ENCODE measurements at regions of chr10 and their contacts with region 1.

Region 1: GRCh38 chr10:119165171-119166110 is at the start of gene SFXN4:
- DNase-seq: peak; percentile 59 to 91 (median 74)
- ATAC-seq: peak; percentile 94
- H3K4me3 ChIP-seq: peak within 1 kb of the TSS; percentile 92
- H3K4me3 Mint-ChIP-seq: peak within 1 kb of the TSS; percentile 94
- H3K27ac ChIP-seq: peak within 1 kb of the TSS; percentile 50 to 75
- H3K27ac Mint-ChIP-seq: peak within 1 kb of the TSS; percentile 90
- H3K4me1 ChIP-seq: peaks cover 24% of the 10 kb centered on the region
- H3K4me1 Mint-ChIP-seq: peaks cover 49% of the 10 kb centered on the region
- H3K27me3 ChIP-seq: no peaks in the 10 kb centered on the region
- H3K27me3 Mint-ChIP-seq: no peaks in the 10 kb centered on the region
- CTCF ChIP-seq: no peak
- total RNA-seq, gene SFXN4: 7.1 to 7.8 TPM

Region 2: DNA sequence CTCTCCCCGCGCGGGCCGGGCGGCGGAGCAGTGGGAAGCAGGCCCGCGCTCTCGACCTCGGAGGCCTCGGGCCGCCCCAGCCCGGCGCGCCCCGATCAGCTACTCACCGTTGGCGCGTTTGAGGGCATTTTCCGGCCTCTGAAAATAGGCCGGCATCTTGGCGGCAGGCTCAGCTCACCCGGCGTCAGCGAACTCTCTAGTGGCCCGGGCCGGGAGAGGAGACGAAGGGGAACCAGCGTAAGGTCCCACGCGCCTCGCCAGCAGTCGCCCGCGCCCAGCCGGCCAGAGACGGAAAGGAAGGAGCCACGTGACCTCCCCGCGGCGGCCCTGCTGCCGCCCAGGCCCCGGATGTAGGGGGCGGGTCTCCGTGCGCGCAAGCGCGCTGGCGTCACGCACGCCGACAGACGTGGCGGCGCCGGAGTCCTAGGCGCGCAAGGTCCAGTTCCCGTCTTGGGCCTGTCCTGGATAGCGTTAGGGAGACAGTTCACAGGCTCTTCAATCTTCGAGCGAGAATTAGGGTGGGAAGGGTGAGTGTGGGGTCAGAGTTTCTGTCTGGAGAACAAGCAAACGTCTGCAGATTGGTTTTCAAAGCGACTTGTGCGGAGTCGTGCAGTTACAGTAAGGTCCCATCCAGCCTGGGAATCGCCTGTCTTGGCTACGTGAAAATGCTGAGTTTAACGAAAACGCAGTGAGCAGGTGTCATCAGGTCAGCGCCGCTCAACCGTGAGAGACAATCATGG is 84.8 kb before region 1 on chr10 and contains the start of gene EIF3A:
- CTCF ChIA-PET with region 1: no interaction called
- POLR2A ChIA-PET with region 1: interaction called, 8 read pairs
- intact Hi-C with region 1: loop called in 1 of 2 experiments (anchors 2 kb)
- DNase-seq: peak; percentile 82 to 96 (median 88)
- ATAC-seq: peak; percentile 69
- H3K4me3 ChIP-seq: peak within 1 kb of the TSS; percentile 99
- H3K4me3 Mint-ChIP-seq: peak within 1 kb of the TSS; percentile 100
- H3K27ac ChIP-seq: peak within 1 kb of the TSS; percentile 92 to 96
- H3K27ac Mint-ChIP-seq: peak within 1 kb of the TSS; percentile 99
- H3K4me1 ChIP-seq: peaks cover 33% of the 10 kb centered on the region
- H3K4me1 Mint-ChIP-seq: peaks cover 64% of the 10 kb centered on the region
- H3K27me3 ChIP-seq: no peaks in the 10 kb centered on the region
- H3K27me3 Mint-ChIP-seq: no peaks in the 10 kb centered on the region
- CTCF ChIP-seq: no peak
- total RNA-seq, gene EIF3A: 129 TPM

Region 3: GRCh38 chr10:119103903-119104652 is 61.4 kb before region 1 on chr10 and contains the start of gene DENND10:
- CTCF ChIA-PET with region 1: no interaction called
- POLR2A ChIA-PET with region 1: interaction called, 6 read pairs
- intact Hi-C with region 1: loop called in 1 of 2 experiments (anchors 2 kb)
- DNase-seq: peak; percentile 51 to 90 (median 71)
- ATAC-seq: peak; percentile 77
- H3K4me3 ChIP-seq: peak within 1 kb of the TSS; percentile 66
- H3K4me3 Mint-ChIP-seq: peak within 1 kb of the TSS; percentile 95
- H3K27ac ChIP-seq: peak within 1 kb of the TSS in 1 of 2 donors; percentile 40
- H3K27ac Mint-ChIP-seq: peak within 1 kb of the TSS; percentile 94
- H3K4me1 ChIP-seq: peaks cover 26% of the 10 kb centered on the region
- H3K4me1 Mint-ChIP-seq: peaks cover 13% of the 10 kb centered on the region
- H3K27me3 ChIP-seq: no peaks in the 10 kb centered on the region
- H3K27me3 Mint-ChIP-seq: no peaks in the 10 kb centered on the region
- CTCF ChIP-seq: no peak
- total RNA-seq, gene DENND10: 40.4 to 45.6 TPM

Region 4: DNA sequence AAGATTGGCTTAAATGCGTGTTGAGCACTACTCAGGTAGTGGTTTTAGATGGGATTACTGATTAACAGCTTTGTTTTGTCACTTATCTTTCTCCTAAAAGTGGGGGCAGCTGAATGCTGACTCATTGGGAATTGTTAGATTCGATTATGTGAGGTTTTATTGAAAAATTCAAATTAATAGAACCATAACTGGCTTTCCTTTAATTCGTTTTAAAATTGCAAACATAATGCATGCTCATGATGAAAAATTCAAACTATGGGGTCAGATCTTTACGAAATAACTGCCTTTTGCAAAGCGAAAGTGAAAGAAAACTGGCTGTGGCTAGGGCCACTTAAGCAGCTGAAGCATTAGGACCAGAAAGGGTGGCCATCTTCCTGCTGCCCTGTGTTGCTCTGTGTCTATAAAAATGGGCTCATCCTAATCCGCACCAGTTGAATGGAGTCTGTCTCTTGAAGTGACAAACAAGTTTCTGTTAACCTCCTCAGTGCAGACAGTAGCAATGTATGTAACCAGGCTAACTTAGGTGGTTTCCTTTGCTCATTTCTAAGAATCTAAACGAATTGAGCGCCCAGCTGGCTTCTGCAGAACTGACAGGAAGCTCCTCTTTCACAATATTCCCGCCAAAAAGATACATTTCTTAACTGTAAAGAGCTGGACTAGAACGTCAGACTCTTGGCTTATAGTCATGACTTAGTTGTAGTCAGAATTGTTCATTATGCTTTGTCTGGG is 33.8 kb before region 1 on chr10:
- CTCF ChIA-PET with region 1: no interaction called
- POLR2A ChIA-PET with region 1: interaction called, 10 read pairs
- intact Hi-C with region 1: no loop called
- DNase-seq: peak in 8 of 14 experiments; percentile 3 to 70 (median 22)
- ATAC-seq: peak; percentile 87
- H3K4me3 ChIP-seq: peak overlapping the region; percentile 58
- H3K4me3 Mint-ChIP-seq: peak overlapping the region; percentile 83
- H3K27ac ChIP-seq: peak overlapping the region; percentile 40 to 57
- H3K27ac Mint-ChIP-seq: peak overlapping the region; percentile 86
- H3K4me1 ChIP-seq: peaks cover 39% of the 10 kb centered on the region
- H3K4me1 Mint-ChIP-seq: peaks cover 39% of the 10 kb centered on the region
- H3K27me3 ChIP-seq: no peaks in the 10 kb centered on the region
- H3K27me3 Mint-ChIP-seq: no peaks in the 10 kb centered on the region
- CTCF ChIP-seq: no peak

Region 5: GRCh38 chr10:119178372-119179119 is 13.1 kb after region 1 on chr10 and contains the start of gene PRDX3:
- CTCF ChIA-PET with region 1: no interaction called
- POLR2A ChIA-PET with region 1: interaction called, 7 read pairs
- intact Hi-C with region 1: loop called in 1 of 2 experiments (anchors 1 kb)
- DNase-seq: peak; percentile 85 to 96 (median 91)
- ATAC-seq: peak; percentile 97
- H3K4me3 ChIP-seq: peak within 1 kb of the TSS; percentile 93
- H3K4me3 Mint-ChIP-seq: peak within 1 kb of the TSS; percentile 98
- H3K27ac ChIP-seq: peak within 1 kb of the TSS; percentile 71 to 80
- H3K27ac Mint-ChIP-seq: peak within 1 kb of the TSS; percentile 95
- H3K4me1 ChIP-seq: peaks cover 32% of the 10 kb centered on the region
- H3K4me1 Mint-ChIP-seq: peaks cover 35% of the 10 kb centered on the region
- H3K27me3 ChIP-seq: no peaks in the 10 kb centered on the region
- H3K27me3 Mint-ChIP-seq: no peaks in the 10 kb centered on the region
- CTCF ChIP-seq: peak; percentile 19
- total RNA-seq, gene PRDX3: 7.1 to 7.5 TPM

Measured in CD4-positive, alpha-beta T cell (primary cell).